Mammary epithelial cell (primary cell): ENCODE measurements at regions of chr13 and their contacts with region 1.

Region 1: DNA sequence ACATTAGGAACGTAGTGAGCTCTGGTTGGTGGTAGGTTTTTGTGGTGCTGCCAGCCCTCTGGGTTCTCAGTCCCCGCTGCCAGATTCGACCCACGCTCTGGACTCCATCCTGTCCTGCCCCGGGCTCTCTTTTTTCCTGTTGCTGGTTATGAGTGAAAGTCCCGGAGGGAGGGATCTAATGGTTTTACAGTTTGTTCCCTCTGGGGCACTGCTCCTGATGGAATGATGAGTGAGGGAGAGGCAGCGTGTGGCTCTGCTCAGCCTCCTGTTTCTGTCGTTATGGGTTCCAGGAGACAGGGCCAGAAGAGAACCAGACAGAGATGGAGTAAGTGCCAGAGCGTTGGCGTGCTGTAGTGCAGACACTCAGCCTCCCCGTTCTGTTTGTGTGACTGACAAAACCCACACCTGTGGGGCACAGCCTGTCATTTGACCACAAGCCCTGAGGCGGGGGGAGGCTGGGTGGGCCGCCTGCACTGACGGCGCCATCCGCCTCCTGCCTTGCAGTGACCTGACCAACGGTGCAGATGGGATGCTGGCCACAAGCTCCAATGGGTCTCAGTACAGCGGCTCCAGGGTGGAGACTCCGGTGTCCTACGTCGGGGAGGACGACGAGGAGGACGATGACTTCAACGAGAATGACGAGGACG is 18.3 kb downstream of the ATP4B start:
- DNase-seq: no peak
- H3K4me3 ChIP-seq: no peak overlapping the region
- H3K27ac ChIP-seq: no peak overlapping the region
- H3K4me1 ChIP-seq: no peaks in the 10 kb centered on the region
- H3K27me3 ChIP-seq: no peaks in the 10 kb centered on the region
- CTCF ChIP-seq: no peak

Region 2: GRCh38 chr13:112554214-112554850 is 1085.4 kb before region 1 on chr13:
- CTCF ChIA-PET with region 1: no interaction called
- dilution Hi-C with region 1: no loop called
- in situ Hi-C with region 1: no loop called
- intact Hi-C with region 1: no loop called
- DNase-seq: no peak
- H3K4me3 ChIP-seq: no peak overlapping the region
- H3K27ac ChIP-seq: no peak overlapping the region
- H3K4me1 ChIP-seq: no peaks in the 10 kb centered on the region
- H3K27me3 ChIP-seq: no peaks in the 10 kb centered on the region
- CTCF ChIP-seq: no peak

Region 3: GRCh38 chr13:113625965-113626721 is 13.6 kb before region 1 on chr13:
- CTCF ChIA-PET with region 1: no interaction called
- dilution Hi-C with region 1: no loop called
- in situ Hi-C with region 1: no loop called
- intact Hi-C with region 1: no loop called
- DNase-seq: no peak
- H3K4me3 ChIP-seq: no peak overlapping the region
- H3K27ac ChIP-seq: no peak overlapping the region
- H3K4me1 ChIP-seq: no peaks in the 10 kb centered on the region
- H3K27me3 ChIP-seq: no peaks in the 10 kb centered on the region
- CTCF ChIP-seq: no peak

Region 4: GRCh38 chr13:113746143-113746525 is 106.4 kb after region 1 on chr13:
- CTCF ChIA-PET with region 1: no interaction called
- dilution Hi-C with region 1: loop called (anchors 5 kb)
- in situ Hi-C with region 1: no loop called
- intact Hi-C with region 1: no loop called
- DNase-seq: no peak
- H3K4me3 ChIP-seq: no peak overlapping the region
- H3K27ac ChIP-seq: no peak overlapping the region
- H3K4me1 ChIP-seq: peaks cover 12% of the 10 kb centered on the region
- H3K27me3 ChIP-seq: no peaks in the 10 kb centered on the region
- CTCF ChIP-seq: no peak